ENCODE measurements at regions of chr11 and their contacts with region 1.

Region 1: DNA sequence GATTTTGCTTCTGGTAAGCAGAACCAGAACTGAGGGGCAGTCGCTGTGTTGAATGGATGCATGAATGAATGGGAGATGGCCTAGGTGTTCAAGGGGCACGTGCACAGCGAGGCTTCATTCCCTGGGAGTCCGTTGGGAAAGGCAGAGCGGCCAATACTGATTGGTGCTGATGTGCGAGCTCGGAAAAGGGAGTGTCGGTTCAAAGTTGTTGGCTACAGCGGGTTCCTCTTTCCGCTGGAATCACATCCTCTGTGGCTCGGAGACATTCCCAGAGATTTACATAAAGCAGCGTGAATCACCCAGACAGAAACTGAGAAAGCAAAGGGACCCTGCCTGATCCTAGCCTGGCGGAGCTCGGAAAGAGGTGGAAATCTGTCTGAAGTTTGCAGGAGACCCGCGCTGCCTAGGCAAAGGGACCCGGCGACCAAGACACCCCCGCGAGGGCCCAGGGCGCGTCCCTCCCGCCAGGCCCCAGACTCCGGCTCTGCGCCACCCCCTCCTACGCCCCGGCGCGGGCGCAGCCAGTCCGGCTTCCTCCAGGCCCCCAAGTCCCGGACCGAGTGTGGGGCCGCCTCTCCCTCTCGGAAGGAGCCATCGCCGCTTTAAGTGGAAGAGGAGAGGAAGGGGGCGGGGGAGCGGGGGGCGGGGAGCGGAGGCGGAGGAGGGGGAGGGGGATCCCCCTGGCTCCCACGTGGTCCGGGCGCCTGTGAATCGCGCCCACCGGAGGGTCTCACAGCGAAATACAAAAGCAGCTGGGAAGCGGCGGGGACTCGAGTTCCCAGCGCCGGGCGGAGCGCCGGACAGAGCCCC is at the start of gene FJX1:
- DNase-seq: peak; percentile 20 to 64 (median 49)
- H3K4me3 ChIP-seq: peak within 1 kb of the TSS; percentile 25 to 73 (median 35)
- H3K4me3 Mint-ChIP-seq: peak within 1 kb of the TSS; percentile 76 to 94
- H3K27ac ChIP-seq: no peak within 1 kb of the TSS
- H3K27ac Mint-ChIP-seq: peak within 1 kb of the TSS in 1 of 7 donors; percentile 56
- H3K4me1 ChIP-seq: peaks cover 17 to 26% of the 10 kb centered on the region in 2 donors
- H3K4me1 Mint-ChIP-seq: peaks cover 17% of the 10 kb centered on the region
- H3K27me3 ChIP-seq: peaks cover 65 to 66% of the 10 kb centered on the region in 2 donors
- H3K27me3 Mint-ChIP-seq: peaks cover 52 to 69% (median 64%) of the 10 kb centered on the region in 3 donors
- CTCF ChIP-seq: no peak
- polyA plus RNA-seq, gene FJX1: 0.05 TPM in 1 of 3 donors, not detected in the others

Region 2: DNA sequence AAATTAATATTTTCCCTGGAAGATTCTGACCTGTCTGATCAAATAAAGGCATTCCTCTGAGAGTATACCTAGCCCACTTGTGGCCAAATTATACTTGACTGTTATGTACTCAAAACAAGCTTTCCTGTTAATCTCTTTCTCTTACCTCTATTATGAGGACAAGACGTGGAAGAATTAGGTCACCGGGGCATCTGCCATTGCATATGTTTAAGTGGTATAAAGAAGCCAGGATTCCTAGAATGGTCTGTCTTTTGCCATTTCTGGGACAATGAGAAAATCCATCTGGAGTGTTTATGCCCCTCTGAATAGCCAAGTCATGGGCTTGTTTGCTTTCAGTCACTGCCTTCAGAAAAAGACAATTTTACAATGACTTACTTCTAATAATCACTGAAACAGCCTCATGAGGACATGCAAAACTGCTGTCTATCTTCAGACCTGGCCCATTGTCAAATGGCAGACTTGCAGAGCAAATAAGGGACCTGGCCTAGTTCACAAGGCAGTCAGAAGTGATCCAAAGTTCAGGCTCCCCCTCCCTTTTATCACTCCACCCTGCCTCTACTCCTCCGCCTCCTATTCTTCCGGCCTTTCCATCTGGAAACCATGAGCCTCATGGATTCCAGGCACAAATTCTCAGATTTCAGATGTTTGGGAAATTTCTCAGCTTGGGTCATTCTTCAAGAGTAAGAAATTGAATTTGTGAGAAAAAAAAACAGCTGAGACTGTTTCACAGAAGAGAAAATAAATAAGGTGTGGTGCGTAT is 197.8 kb after region 1 on chr11:
- intact Hi-C with region 1: loop called (anchors 10 kb)
- DNase-seq: no peak
- H3K4me3 ChIP-seq: no peak overlapping the region
- H3K4me3 Mint-ChIP-seq: no peak overlapping the region
- H3K27ac ChIP-seq: no peak overlapping the region
- H3K27ac Mint-ChIP-seq: no peak overlapping the region
- H3K4me1 ChIP-seq: no peaks in the 10 kb centered on the region
- H3K4me1 Mint-ChIP-seq: peaks cover 3% of the 10 kb centered on the region
- H3K27me3 ChIP-seq: no peaks in the 10 kb centered on the region
- H3K27me3 Mint-ChIP-seq: no peaks in the 10 kb centered on the region
- CTCF ChIP-seq: no peak

Region 3: DNA sequence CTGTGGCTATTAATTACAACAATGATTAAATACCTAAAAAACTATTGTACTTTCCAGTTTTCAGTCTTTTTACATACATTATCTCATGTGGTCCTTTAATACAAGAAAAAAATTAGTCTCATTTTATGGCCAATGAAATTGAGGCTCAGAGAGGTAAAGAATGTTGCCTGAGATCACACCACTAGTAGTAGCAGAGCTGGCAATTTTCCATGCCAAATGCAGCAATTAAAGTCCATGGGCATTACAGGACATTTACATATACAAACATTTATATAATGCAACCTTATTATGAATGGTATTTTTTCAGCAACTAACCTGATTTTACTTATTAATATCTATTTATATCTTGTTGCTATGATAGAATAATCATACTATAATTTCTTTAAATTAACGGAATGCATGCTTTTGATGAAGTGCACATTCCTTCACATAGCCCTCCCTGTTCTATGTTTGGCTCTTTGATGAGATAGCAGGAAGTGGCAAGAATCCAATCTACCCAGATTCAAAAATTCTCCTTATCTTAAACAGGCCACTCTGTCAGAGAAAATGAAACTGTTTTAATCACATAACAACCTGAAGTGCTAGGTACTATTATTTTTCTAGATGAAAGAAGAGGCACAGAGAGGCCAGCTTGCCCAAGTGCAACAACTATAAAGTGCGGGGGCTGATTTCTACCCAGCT is 205.1 kb after region 1 on chr11:
- intact Hi-C with region 1: loop called (anchors 10 kb)
- DNase-seq: no peak
- H3K4me3 ChIP-seq: no peak overlapping the region
- H3K4me3 Mint-ChIP-seq: no peak overlapping the region
- H3K27ac ChIP-seq: no peak overlapping the region
- H3K27ac Mint-ChIP-seq: no peak overlapping the region
- H3K4me1 ChIP-seq: peaks cover 6 to 9% of the 10 kb centered on the region in 2 donors
- H3K4me1 Mint-ChIP-seq: peaks cover 10% of the 10 kb centered on the region
- H3K27me3 ChIP-seq: no peaks in the 10 kb centered on the region
- H3K27me3 Mint-ChIP-seq: peaks cover 0 to 2% (median 0%) of the 10 kb centered on the region in 3 donors
- CTCF ChIP-seq: no peak

Region 4: GRCh38 chr11:36265793-36266628 is 648.1 kb after region 1 on chr11:
- intact Hi-C with region 1: loop called (anchors 2 to 5 kb)
- DNase-seq: peak; percentile 38 to 54 (median 44)
- H3K4me3 ChIP-seq: no peak overlapping the region
- H3K4me3 Mint-ChIP-seq: no peak overlapping the region
- H3K27ac ChIP-seq: no peak overlapping the region
- H3K27ac Mint-ChIP-seq: no peak overlapping the region
- H3K4me1 ChIP-seq: no peaks in the 10 kb centered on the region
- H3K4me1 Mint-ChIP-seq: peaks cover 4% of the 10 kb centered on the region
- H3K27me3 ChIP-seq: no peaks in the 10 kb centered on the region
- H3K27me3 Mint-ChIP-seq: peaks cover 2 to 10% (median 5%) of the 10 kb centered on the region in 3 donors
- CTCF ChIP-seq: peak; percentile 87

Region 5: GRCh38 chr11:36492724-36493304 is 874.9 kb after region 1 on chr11:
- intact Hi-C with region 1: loop called in 1 of 2 experiments (anchors 10 kb)
- DNase-seq: peak; percentile 41 to 57 (median 50)
- H3K4me3 ChIP-seq: no peak overlapping the region
- H3K4me3 Mint-ChIP-seq: no peak overlapping the region
- H3K27ac ChIP-seq: peak overlapping the region in 1 of 2 donors; percentile 18
- H3K27ac Mint-ChIP-seq: peak overlapping the region in 2 of 7 donors; percentile 40 to 53
- H3K4me1 ChIP-seq: peaks cover 5 to 7% of the 10 kb centered on the region in 2 donors
- H3K4me1 Mint-ChIP-seq: peaks cover 11% of the 10 kb centered on the region
- H3K27me3 ChIP-seq: no peaks in the 10 kb centered on the region
- H3K27me3 Mint-ChIP-seq: no peaks in the 10 kb centered on the region
- CTCF ChIP-seq: peak; percentile 82